Activated CD4-positive, alpha-beta T cell treated with anti-CD3 and anti-CD28 coated beads for 36 hours (primary cell): ENCODE measurements at regions of chr5 and their contacts with region 1.

Region 1: DNA sequence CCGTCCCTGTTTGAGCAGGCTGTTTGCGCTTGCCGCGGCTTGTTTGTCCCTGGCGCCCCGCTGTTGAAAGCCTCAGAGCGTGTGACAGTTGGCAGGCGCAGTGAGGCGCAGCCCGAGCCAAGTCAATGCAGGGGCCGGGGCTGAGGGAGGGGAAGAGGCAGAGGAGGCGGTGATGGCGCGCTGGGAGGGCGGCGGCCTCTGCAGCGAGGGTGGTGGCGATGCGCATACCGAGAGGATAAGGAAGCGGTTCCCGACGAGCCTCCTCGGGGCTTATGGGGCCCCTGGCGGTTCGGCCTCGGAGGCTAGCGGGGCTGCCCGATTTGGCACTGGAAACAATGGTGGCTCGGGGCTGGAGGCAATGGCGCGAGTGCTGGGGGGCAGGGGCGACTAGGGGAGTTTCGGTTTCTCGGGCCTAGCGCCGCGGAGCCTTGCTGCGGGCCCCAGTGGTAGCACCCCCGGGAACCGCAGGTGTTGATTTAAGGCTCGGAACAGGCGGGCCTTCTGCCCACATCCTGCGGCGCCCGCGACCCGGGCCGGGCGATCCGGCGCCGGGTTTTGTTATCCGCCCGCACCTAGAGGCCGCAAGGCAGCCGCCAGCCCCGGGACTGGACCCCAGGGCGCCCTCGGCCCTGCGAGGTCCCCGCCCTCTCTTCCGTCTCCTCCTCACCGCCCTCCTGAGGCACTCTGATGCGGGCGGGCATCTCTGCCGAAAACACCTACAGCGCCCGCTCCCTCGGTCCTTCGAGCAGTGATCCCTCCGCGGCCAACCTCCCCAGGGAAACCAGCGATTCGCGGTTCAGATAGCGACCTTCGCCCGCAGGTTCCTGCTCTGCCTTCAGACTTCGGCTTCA is 947 bp upstream of the LNPEP start:
- DNase-seq: peak; percentile 96
- ATAC-seq: peak; percentile 74
- H3K4me3 Mint-ChIP-seq: peak overlapping the region; percentile 96
- H3K27ac Mint-ChIP-seq: peak overlapping the region; percentile 98
- H3K4me1 Mint-ChIP-seq: peaks cover 60% of the 10 kb centered on the region
- H3K27me3 Mint-ChIP-seq: no peaks in the 10 kb centered on the region

Region 2: DNA sequence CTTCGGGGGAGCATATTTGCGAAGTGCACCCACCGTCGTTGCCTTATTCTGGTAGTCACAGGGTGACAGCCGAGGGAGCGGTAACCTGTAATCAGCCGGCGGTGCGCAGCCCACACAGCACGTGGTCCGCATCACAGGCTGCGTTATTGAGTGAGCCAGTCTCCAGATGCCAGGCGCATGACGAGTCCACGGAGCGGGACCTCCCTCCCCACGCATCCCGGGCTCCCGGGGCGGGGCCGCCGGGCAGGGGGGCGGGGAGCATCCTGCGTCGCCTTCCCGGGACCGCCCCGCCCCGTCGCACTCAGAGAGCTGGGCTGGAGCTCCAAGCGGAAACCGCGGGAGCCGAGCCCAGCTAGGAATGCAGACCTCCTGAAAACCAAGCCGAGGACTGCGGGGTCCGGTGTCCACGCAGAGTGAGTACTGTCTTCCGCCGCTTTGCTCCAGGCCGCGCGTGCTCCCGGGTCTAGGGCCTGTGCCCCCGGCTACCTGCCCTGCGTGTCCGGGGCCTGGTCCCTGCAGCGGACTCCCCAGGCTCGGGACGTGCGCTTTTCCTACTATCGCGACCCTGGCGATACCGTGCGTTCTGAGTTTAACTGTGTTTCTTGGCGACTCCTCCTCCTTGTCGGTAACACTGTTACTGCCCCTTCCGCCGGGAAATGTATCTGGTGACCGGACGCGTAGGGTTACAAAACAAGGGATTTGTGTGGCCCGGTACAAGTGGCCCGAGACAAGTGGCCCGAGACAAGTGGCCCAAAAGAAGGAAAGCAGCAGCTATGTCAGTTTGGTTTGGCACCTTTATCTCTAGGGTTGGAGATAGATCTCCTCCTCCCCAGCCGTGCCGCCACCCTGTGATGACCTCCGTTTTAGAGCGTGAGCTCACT is 232.2 kb before region 1 on chr5:
- CTCF ChIA-PET with region 1: no interaction called
- POLR2A ChIA-PET with region 1: no interaction called
- intact Hi-C with region 1: loop called (anchors 1 to 2 kb)
- DNase-seq: peak; percentile 92
- ATAC-seq: peak; percentile 78
- H3K4me3 Mint-ChIP-seq: peak overlapping the region; percentile 91
- H3K27ac Mint-ChIP-seq: peak overlapping the region; percentile 81
- H3K4me1 Mint-ChIP-seq: peaks cover 51% of the 10 kb centered on the region
- H3K27me3 Mint-ChIP-seq: no peaks in the 10 kb centered on the region

Region 3: GRCh38 chr5:96876292-96876850 is 58.6 kb before region 1 on chr5 and contains the start of gene ERAP2:
- CTCF ChIA-PET with region 1: interaction called, 8 read pairs
- POLR2A ChIA-PET with region 1: interaction called, 11 read pairs
- intact Hi-C with region 1: loop called in 1 of 2 experiments (anchors 1 kb)
- DNase-seq: peak; percentile 34
- ATAC-seq: peak; percentile 72
- H3K4me3 Mint-ChIP-seq: peak within 1 kb of the TSS; percentile 86
- H3K27ac Mint-ChIP-seq: peak within 1 kb of the TSS; percentile 94
- H3K4me1 Mint-ChIP-seq: peaks cover 70% of the 10 kb centered on the region
- H3K27me3 Mint-ChIP-seq: no peaks in the 10 kb centered on the region
- total RNA-seq, gene ERAP2: 57.3 to 60.7 TPM

Region 4: GRCh38 chr5:96957254-96958049 is 22.5 kb after region 1 on chr5:
- CTCF ChIA-PET with region 1: interaction called, 8 read pairs
- POLR2A ChIA-PET with region 1: interaction called, 5 read pairs
- intact Hi-C with region 1: loop called in 1 of 2 experiments (anchors 1 kb)
- DNase-seq: peak; percentile 73
- ATAC-seq: peak; percentile 93
- H3K4me3 Mint-ChIP-seq: peak overlapping the region; percentile 51
- H3K27ac Mint-ChIP-seq: peak overlapping the region; percentile 84
- H3K4me1 Mint-ChIP-seq: peaks cover 74% of the 10 kb centered on the region
- H3K27me3 Mint-ChIP-seq: no peaks in the 10 kb centered on the region

Region 5: DNA sequence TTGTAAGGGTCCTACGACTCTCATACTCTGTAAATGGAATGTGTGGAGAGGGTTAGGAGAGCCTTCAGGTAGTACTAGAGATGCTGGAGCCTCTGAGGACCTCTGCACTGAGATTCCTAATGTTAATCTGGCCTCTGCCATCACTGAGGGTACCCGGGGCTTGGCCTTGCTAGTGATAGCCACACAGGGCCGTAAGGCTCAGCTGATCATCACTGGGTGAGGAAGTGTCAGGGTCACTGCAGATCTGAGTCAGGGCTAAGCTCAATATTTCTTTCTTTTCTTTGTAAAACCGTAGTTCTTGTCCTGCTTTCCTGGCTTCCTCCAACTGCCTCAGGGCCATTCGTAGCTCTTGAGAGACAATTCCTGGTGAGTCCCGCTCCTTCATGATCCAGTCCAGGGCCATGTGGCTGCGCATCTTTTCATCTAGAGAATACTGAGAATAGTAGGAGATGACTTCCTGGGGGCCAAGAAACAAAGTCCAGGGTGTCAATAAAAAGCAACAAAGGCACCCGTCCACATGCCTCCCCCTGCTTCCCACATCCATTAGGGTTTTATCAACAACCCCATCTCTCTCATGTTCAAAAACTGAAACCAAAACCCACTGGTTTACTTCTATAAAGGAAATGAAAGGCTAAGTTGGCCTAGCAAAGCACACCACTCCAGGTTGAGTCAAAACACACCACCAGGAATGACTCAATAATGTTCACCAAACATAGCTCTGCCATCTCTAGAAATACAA is 159.8 kb after region 1 on chr5:
- CTCF ChIA-PET with region 1: no interaction called
- POLR2A ChIA-PET with region 1: no interaction called
- intact Hi-C with region 1: loop called in 1 of 2 experiments (anchors 5 kb)
- DNase-seq: peak; percentile 59
- ATAC-seq: peak; percentile 99
- H3K4me3 Mint-ChIP-seq: no peak overlapping the region
- H3K27ac Mint-ChIP-seq: peak overlapping the region; percentile 15
- H3K4me1 Mint-ChIP-seq: peaks cover 16% of the 10 kb centered on the region
- H3K27me3 Mint-ChIP-seq: peaks cover 10% of the 10 kb centered on the region

Region 6: DNA sequence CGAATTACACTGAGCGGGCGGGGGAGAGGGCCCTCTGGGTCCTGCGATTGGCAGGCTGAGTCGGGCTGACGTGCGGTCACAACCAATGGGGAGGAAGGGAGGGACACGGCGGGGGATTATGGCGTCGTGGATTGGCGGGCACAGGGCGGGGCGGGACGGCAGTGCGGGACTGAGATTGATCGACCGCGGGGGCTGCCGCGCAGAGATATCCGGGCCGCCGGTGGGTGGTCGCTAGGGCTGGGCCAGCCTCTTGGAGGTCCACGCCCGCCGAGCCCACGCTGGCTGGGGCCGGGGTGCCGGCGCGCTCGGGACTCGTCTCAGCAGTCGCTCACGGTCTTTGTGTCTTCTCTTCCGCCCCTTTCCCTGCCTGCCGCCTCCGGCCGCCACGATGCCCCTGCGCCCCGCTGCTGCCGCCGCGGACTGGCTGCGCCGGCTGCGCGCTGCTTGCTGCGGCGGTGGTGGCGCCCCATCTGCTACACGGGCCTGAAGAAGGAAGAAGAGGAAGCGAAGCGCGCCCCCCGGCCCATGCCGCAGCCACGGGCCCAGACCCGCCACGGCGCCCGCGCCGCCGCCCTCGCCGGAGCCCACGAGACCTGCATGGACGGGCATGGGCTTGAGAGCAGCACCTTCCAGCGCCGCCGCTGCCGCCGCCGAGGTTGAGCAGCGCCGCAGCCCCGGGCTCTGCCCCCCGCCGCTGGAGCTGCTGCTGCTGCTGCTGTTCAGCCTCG is 1838.7 kb after region 1 on chr5 and contains the start of gene RGMB:
- CTCF ChIA-PET with region 1: no interaction called
- POLR2A ChIA-PET with region 1: no interaction called
- intact Hi-C with region 1: loop called in 1 of 2 experiments (anchors 5 kb)
- DNase-seq: peak; percentile 95
- ATAC-seq: peak; percentile 92
- H3K4me3 Mint-ChIP-seq: peak within 1 kb of the TSS; percentile 88
- H3K27ac Mint-ChIP-seq: peak within 1 kb of the TSS; percentile 77
- H3K4me1 Mint-ChIP-seq: peaks cover 48% of the 10 kb centered on the region
- H3K27me3 Mint-ChIP-seq: peaks cover 26% of the 10 kb centered on the region
- total RNA-seq, gene RGMB: 2.8 to 2.9 TPM